ENCODE measurements at regions of chr5 and their contacts with region 1.

Region 1: GRCh38 chr5:98827161-98827560 is 53.7 kb downstream of the RGMB start:
- DNase-seq: peak; percentile 62
- ATAC-seq: peak; percentile 66
- H3K4me3 ChIP-seq: no peak overlapping the region
- H3K27ac ChIP-seq: no peak overlapping the region
- H3K4me1 ChIP-seq: no peaks in the 10 kb centered on the region
- H3K27me3 ChIP-seq: no peaks in the 10 kb centered on the region
- CTCF ChIP-seq: peak; percentile 67
- POLR2A ChIP-seq: no peak; the same call in 1 of the 2 replicates
- RAD21 ChIP-seq: peak; percentile 86

Region 2: DNA sequence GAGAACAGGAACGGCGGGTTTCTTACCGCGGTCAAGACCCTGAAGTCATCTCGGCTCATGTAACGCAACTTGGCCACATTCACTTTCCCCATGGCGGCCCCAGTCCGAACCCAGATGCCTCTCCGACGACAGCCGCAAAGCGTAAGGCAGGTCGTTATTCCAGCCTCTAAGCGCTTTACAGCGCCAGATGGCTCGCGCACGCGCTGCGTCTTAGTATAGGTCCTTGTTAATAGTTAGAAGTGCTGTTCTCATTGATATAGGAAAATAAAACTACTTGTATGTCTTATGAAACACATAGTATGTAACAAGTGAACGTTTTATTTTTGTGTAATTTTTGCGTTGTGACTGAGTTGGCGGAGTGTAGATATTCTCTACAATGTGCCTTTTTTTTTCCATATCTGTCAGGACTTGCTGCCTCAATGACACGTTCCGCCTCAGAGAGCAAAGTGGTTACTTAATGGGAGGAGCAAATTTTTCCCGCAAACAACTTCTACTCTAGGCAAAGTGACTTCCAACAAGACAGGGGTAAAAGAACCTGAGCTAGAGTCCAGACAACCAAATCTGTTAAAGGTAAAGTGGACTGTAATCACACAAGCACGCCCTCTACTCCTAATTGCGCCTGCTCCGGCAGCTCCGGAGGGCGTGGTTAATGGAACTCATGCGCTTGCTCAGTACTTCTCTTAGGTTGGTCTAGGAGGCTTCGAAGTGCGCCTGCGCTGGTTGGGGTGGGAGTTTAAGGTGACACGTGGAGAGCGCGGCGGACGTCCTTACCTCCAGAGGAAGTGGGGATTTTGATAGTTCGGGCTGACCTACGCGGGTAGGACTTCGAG is 1643.8 kb before region 1 on chr5 and contains the start of gene RIOK2:
- CTCF ChIA-PET with region 1: no interaction called
- POLR2A ChIA-PET with region 1: no interaction called
- dilution Hi-C with region 1: no loop called
- in situ Hi-C with region 1: no loop called
- intact Hi-C with region 1: loop called (anchors 5 kb)
- DNase-seq: peak; percentile 93
- ATAC-seq: peak; percentile 96
- H3K4me3 ChIP-seq: peak within 1 kb of the TSS; percentile 82
- H3K27ac ChIP-seq: peak within 1 kb of the TSS; percentile 86
- H3K4me1 ChIP-seq: peaks cover 2% of the 10 kb centered on the region; the same call in 1 of the 2 replicates
- H3K27me3 ChIP-seq: no peaks in the 10 kb centered on the region
- CTCF ChIP-seq: no peak
- POLR2A ChIP-seq: peak; percentile 87
- RAD21 ChIP-seq: peak; percentile 16; the same call in 1 of the 2 replicates
- total RNA-seq, gene RIOK2: 17.7 and 26.1 TPM in 2 replicates

Region 3: DNA sequence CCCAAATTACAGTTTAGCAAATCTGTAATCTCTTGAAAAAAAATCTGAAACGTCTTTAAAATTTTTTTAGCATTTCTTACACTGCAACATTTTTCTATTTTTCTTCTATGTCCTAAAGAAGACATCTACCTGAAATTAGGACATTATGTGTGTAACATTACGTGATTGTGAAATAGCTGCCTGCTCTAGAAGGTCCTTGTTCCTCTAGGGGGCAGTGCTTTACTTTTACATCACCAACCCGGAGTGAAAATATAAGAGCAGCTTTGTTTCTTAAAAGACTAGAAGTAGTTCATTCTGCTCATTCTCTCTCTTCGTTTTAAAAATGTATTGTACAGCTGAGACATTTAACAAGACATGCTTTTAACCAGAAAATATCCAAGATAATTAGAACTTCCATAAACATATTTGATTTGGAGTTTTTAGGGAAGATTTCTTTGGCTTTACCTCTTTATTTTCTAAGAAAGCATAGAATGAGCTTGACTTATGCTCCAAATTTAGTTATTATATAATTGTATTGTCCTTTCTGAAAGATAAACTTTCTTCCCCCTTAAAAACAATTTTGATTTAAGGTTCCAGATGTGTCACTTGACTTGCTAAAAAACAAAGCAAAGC is 1596.0 kb before region 1 on chr5:
- CTCF ChIA-PET with region 1: no interaction called
- POLR2A ChIA-PET with region 1: no interaction called
- dilution Hi-C with region 1: no loop called
- in situ Hi-C with region 1: no loop called
- intact Hi-C with region 1: loop called (anchors 2 kb)
- DNase-seq: peak; percentile 86
- ATAC-seq: peak; percentile 87
- H3K4me3 ChIP-seq: no peak overlapping the region
- H3K27ac ChIP-seq: no peak overlapping the region
- H3K4me1 ChIP-seq: no peaks in the 10 kb centered on the region
- H3K27me3 ChIP-seq: no peaks in the 10 kb centered on the region
- CTCF ChIP-seq: peak; percentile 79
- POLR2A ChIP-seq: no peak
- RAD21 ChIP-seq: peak; percentile 77

Region 4: DNA sequence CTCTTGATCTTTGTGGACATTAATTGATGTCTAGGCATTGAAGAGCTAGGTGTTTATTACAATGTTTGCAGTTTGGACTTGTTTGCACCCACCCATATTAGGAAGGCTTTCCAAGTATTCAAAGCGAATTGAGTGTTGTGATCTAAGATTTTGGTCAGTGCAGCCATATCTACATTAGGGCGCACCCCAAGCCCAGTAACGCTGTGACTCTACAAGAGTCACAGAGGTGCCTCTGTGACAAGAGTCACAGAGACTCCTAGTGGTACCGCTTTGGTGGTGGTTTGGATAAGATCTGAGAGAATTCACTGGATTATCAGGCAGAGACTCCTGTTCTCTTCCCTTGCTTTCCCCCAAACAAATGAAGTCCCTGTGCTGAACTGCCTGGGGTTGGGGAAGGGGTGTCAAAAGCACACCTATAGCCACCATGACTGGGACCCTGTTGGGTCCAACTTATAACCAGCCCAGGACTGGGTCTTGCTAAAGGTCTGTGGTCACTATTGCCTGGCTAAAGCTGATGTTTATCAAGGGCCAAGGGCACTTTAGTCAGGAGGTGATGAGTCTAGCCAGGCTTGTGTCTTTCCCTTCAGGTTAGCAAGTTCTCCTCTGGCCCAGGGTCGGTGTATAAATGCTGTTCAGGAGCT is 1530.0 kb before region 1 on chr5:
- CTCF ChIA-PET with region 1: no interaction called
- POLR2A ChIA-PET with region 1: no interaction called
- dilution Hi-C with region 1: no loop called
- in situ Hi-C with region 1: no loop called
- intact Hi-C with region 1: loop called (anchors 1 kb)
- DNase-seq: peak; percentile 23
- ATAC-seq: peak; percentile 62
- H3K4me3 ChIP-seq: no peak overlapping the region
- H3K27ac ChIP-seq: no peak overlapping the region
- H3K4me1 ChIP-seq: no peaks in the 10 kb centered on the region; the same call in 1 of the 2 replicates
- H3K27me3 ChIP-seq: no peaks in the 10 kb centered on the region
- CTCF ChIP-seq: peak; percentile 54
- POLR2A ChIP-seq: no peak
- RAD21 ChIP-seq: peak; percentile 59

Region 5: GRCh38 chr5:97425511-97425910 is 1401.7 kb before region 1 on chr5:
- CTCF ChIA-PET with region 1: no interaction called
- POLR2A ChIA-PET with region 1: no interaction called
- dilution Hi-C with region 1: no loop called
- in situ Hi-C with region 1: no loop called
- intact Hi-C with region 1: loop called (anchors 5 kb)
- DNase-seq: peak; percentile 16
- ATAC-seq: no peak
- H3K4me3 ChIP-seq: no peak overlapping the region
- H3K27ac ChIP-seq: no peak overlapping the region
- H3K4me1 ChIP-seq: no peaks in the 10 kb centered on the region
- H3K27me3 ChIP-seq: no peaks in the 10 kb centered on the region
- CTCF ChIP-seq: peak; percentile 42
- POLR2A ChIP-seq: no peak
- RAD21 ChIP-seq: peak; percentile 49

Region 6: DNA sequence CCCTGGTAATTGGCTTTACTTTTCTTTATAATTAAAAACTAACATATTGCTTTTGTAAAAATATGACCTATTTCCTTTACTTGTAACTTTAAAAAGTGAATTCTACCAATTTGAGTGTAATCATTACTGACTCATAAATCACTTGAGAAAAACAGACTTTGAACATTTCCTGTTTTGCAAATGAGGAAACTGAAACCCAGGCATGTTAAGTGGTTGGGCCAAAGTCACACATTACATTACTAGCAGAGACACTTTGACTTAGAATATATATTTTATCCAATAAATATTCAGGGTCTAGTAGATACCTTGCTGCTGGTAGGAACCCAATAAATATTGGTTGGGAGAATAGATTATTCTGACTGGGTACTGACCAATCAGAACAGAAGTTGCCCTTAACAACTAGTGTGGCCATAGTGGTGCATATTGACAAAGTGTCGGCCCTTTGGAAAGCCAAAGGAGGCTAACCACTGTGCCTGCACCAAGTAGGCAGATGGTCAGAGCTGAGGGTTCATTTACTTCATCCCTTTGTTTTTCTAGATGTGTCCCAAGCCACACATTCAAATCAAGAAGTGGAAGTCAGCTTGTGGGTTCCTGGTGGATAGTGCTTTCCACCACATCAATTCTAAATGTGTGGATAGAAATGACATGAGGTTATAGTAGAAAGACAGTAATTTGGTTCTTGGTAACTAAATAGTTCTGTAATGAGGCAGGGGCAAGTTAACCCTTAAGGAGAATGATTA is 1279.0 kb before region 1 on chr5:
- CTCF ChIA-PET with region 1: no interaction called
- POLR2A ChIA-PET with region 1: no interaction called
- dilution Hi-C with region 1: no loop called
- in situ Hi-C with region 1: no loop called
- intact Hi-C with region 1: loop called (anchors 10 kb)
- DNase-seq: no peak
- ATAC-seq: no peak
- H3K4me3 ChIP-seq: no peak overlapping the region
- H3K27ac ChIP-seq: no peak overlapping the region
- H3K4me1 ChIP-seq: 0 out of 2 replicates have a peak, but pooled peaks cover 2% of the 10 kb centered on the region
- H3K27me3 ChIP-seq: no peaks in the 10 kb centered on the region
- CTCF ChIP-seq: no peak
- POLR2A ChIP-seq: no peak
- RAD21 ChIP-seq: no peak

Region 7: GRCh38 chr5:98492258-98492657 is 334.9 kb before region 1 on chr5:
- CTCF ChIA-PET with region 1: no interaction called
- POLR2A ChIA-PET with region 1: no interaction called
- dilution Hi-C with region 1: no loop called
- in situ Hi-C with region 1: no loop called
- intact Hi-C with region 1: no loop called
- DNase-seq: no peak
- ATAC-seq: no peak
- H3K4me3 ChIP-seq: no peak overlapping the region
- H3K27ac ChIP-seq: no peak overlapping the region
- H3K4me1 ChIP-seq: no peaks in the 10 kb centered on the region
- H3K27me3 ChIP-seq: no peaks in the 10 kb centered on the region
- CTCF ChIP-seq: no peak
- POLR2A ChIP-seq: no peak
- RAD21 ChIP-seq: no peak

Region 8: DNA sequence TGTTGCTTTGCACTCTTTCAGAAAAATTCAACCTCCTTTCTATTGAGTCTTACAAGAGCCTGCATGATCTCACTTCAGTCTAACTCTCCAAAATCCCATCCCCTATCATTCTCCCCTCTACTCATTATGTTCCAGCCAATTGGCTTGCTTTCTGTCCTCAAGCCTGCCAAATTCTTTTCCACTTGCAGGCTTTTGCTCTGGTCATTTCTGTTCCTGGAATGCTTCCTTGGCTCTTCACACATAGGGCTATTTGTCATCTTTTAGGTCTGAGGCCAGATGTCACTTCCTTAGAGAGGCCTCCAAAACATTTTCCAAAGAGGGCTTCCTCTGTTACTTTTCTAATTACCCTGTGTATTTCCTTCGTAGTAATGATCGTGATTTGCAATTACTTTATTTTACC is 113.4 kb after region 1 on chr5:
- CTCF ChIA-PET with region 1: no interaction called
- POLR2A ChIA-PET with region 1: no interaction called
- dilution Hi-C with region 1: no loop called
- in situ Hi-C with region 1: no loop called
- intact Hi-C with region 1: no loop called
- DNase-seq: peak; percentile 10
- ATAC-seq: no peak
- H3K4me3 ChIP-seq: no peak overlapping the region
- H3K27ac ChIP-seq: no peak overlapping the region
- H3K4me1 ChIP-seq: peaks cover 4% of the 10 kb centered on the region; the same call in 1 of the 2 replicates
- H3K27me3 ChIP-seq: no peaks in the 10 kb centered on the region
- CTCF ChIP-seq: no peak
- POLR2A ChIP-seq: no peak
- RAD21 ChIP-seq: no peak

Region 9: DNA sequence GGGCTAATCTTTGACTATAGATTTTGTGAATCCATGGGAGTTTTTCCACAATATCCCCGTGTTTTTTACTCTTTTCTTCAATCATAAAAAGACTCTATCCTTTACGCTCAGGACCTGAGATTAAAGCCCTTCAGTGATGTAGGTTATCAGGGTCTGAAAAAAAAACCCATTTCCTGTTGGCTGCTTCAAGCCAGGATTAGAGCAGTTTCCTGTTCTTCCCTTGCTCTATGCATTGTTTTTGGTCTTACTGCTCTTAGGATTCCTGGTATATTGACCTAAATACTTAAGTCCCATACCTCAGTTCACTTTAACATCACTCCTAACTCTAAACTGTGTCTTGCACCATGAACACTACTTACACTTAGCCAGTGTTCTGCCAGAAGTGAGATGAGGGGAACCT is 420.9 kb after region 1 on chr5:
- CTCF ChIA-PET with region 1: no interaction called
- POLR2A ChIA-PET with region 1: no interaction called
- dilution Hi-C with region 1: no loop called
- in situ Hi-C with region 1: no loop called
- intact Hi-C with region 1: no loop called
- DNase-seq: no peak
- ATAC-seq: no peak
- H3K4me3 ChIP-seq: no peak overlapping the region
- H3K27ac ChIP-seq: no peak overlapping the region
- H3K4me1 ChIP-seq: no peaks in the 10 kb centered on the region
- H3K27me3 ChIP-seq: no peaks in the 10 kb centered on the region
- CTCF ChIP-seq: no peak
- POLR2A ChIP-seq: no peak
- RAD21 ChIP-seq: no peak